GM12878 (cell line): ENCODE measurements at regions of chr15 and their contacts with region 1.

Region 1: GRCh38 chr15:31435261-31435911 is 108.8 kb downstream of the KLF13 start:
- DNase-seq: peak; percentile 87
- ATAC-seq: peak; percentile 85
- H3K4me3 ChIP-seq: peak overlapping the region; percentile 48
- H3K27ac ChIP-seq: peak overlapping the region; percentile 95
- H3K4me1 ChIP-seq: peaks cover 50% of the 10 kb centered on the region
- H3K27me3 ChIP-seq: no peaks in the 10 kb centered on the region
- CTCF ChIP-seq: peak; percentile 85 to 100 (median 92); a peak in 5 of 6 replicates
- EP300 ChIP-seq: peak in 1 of 2 experiments; percentile 43; a peak in 1 of 4 replicates
- POLR2A ChIP-seq: peak; percentile 31
- RAD21 ChIP-seq: peak; percentile 86

Region 2: DNA sequence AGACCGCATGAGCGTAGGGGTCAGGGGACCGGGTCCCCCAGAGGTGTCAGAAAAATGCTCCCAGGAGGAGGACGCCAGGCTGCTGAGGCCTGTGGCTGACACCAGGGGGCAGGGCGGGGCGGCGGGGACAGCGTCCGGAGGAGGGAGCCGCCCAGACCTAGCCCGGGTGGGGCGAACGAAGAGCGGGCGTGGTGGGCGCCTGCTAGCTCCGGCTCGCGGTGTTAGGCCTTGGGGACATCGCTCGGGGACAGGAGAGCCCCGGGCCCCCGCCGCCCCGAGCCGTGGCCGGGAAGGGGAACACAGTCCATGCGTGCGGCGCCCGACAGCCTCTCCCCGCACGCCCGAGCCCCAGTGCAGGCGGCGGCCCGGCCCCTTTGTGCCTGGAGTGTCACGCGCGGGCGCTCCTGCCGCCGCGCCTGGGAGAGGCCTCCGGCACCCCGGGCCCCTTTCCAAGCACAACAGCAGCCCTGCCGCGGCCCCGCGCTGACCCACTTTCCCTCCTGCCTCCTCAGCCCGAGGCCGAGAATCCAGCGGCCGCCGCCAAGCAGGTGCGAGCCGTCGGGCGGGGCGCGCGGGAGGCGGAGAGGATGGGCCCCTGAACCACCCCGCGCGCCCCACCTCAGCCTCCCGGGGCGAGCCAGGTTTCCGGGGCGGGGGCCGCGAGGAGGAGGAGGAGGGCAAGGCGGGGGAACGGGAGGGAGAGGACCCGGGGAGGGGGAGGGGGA is 219.7 kb before region 1 on chr15:
- CTCF ChIA-PET with region 1: interaction called, 32 read pairs
- POLR2A ChIA-PET with region 1: interaction called, 6 read pairs
- RAD21 ChIA-PET with region 1: interaction called, 41 read pairs
- SMC1A ChIA-PET with region 1: interaction called, 48 read pairs
- in situ Hi-C with region 1: no loop called
- intact Hi-C with region 1: no loop called
- DNase-seq: no peak
- ATAC-seq: peak; percentile 91
- H3K4me3 ChIP-seq: peak overlapping the region; percentile 79
- H3K27ac ChIP-seq: peak overlapping the region; percentile 87
- H3K4me1 ChIP-seq: peaks cover 10% of the 10 kb centered on the region
- H3K27me3 ChIP-seq: no peaks in the 10 kb centered on the region
- CTCF ChIP-seq: peak; percentile 80 to 89 (median 89)
- EP300 ChIP-seq: no peak
- POLR2A ChIP-seq: peak; percentile 71
- RAD21 ChIP-seq: peak; percentile 88

Region 3: DNA sequence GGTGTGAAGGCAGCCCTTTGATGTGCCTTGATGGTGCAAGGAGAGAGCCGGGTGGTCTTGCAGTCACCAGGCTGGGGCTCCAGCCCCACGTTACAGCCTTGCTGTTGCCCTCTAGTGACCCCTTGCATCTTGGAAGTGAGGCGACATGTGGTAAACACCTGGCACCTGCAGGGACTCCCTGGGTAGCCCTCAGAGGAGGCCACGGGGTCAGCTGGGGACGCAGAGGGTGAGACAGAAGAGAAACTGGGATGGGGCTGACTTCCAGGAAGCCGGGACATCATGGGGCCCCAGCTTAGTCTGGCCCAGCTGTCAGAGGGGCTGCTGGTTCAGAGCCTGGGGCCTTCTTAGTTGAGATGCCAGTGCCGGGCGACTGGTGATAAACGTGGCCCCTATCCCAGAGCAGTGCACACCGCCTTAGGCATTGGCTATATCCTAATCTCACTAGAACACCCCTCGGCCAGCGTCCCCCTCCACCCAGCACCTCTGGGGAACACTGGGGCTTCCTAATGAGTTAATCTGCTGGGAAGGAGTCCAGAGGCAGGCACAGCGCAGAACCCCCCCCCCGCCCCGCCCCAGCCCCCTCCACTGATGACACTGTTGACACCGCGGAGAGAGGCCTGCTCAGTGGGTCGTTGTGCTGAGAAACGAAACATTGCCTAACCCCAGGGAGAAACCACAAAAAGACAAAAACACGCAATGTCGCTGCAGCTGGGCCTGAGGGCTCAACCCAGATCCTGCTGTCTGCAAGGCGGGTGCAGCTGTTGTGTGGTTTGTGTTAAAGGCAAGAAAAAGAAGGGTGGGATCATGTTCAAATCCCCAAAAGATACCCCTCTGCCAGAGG is 169.3 kb before region 1 on chr15:
- CTCF ChIA-PET with region 1: interaction called, 64 read pairs
- POLR2A ChIA-PET with region 1: interaction called, 5 read pairs
- RAD21 ChIA-PET with region 1: interaction called, 30 read pairs
- SMC1A ChIA-PET with region 1: interaction called, 58 read pairs
- in situ Hi-C with region 1: no loop called
- intact Hi-C with region 1: loop called (anchors 5 kb)
- DNase-seq: peak; percentile 86
- ATAC-seq: peak; percentile 65
- H3K4me3 ChIP-seq: peak overlapping the region; percentile 41; the same call in 1 of the 2 replicates
- H3K27ac ChIP-seq: peak overlapping the region; percentile 94
- H3K4me1 ChIP-seq: peaks cover 63% of the 10 kb centered on the region
- H3K27me3 ChIP-seq: no peaks in the 10 kb centered on the region
- CTCF ChIP-seq: 0 out of 6 replicates have a peak, but pooled peaks of 1 of the 3 experiments have one; percentile 6
- EP300 ChIP-seq: peak; percentile 89 to 93; a peak in 3 of 4 replicates
- POLR2A ChIP-seq: no peak; the same call in 1 of the 2 replicates
- RAD21 ChIP-seq: peak; percentile 32

Region 4: GRCh38 chr15:31338879-31339557 is 96.4 kb before region 1 on chr15:
- CTCF ChIA-PET with region 1: interaction called, 9 read pairs
- POLR2A ChIA-PET with region 1: interaction called, 3 read pairs
- RAD21 ChIA-PET with region 1: interaction called, 5 read pairs
- SMC1A ChIA-PET with region 1: interaction called, 14 read pairs
- in situ Hi-C with region 1: no loop called
- intact Hi-C with region 1: no loop called
- DNase-seq: peak; percentile 75
- ATAC-seq: peak; percentile 81
- H3K4me3 ChIP-seq: peak overlapping the region; percentile 22; the same call in 1 of the 2 replicates
- H3K27ac ChIP-seq: peak overlapping the region; percentile 83
- H3K4me1 ChIP-seq: peaks cover 91% of the 10 kb centered on the region
- H3K27me3 ChIP-seq: no peaks in the 10 kb centered on the region
- CTCF ChIP-seq: no peak
- EP300 ChIP-seq: peak in 1 of 2 experiments; percentile 19; a peak in 2 of 4 replicates
- POLR2A ChIP-seq: no peak
- RAD21 ChIP-seq: no peak

Region 5: GRCh38 chr15:31365655-31366127 is 69.7 kb before region 1 on chr15:
- CTCF ChIA-PET with region 1: interaction called, 83 read pairs
- POLR2A ChIA-PET with region 1: interaction called, 5 read pairs
- RAD21 ChIA-PET with region 1: interaction called, 40 read pairs
- SMC1A ChIA-PET with region 1: interaction called, 45 read pairs
- in situ Hi-C with region 1: no loop called
- intact Hi-C with region 1: loop called (anchors 1 kb)
- DNase-seq: no peak
- ATAC-seq: peak; percentile 81
- H3K4me3 ChIP-seq: peak overlapping the region; percentile 20; the same call in 1 of the 2 replicates
- H3K27ac ChIP-seq: peak overlapping the region; percentile 41
- H3K4me1 ChIP-seq: peaks cover 75% of the 10 kb centered on the region
- H3K27me3 ChIP-seq: no peaks in the 10 kb centered on the region
- CTCF ChIP-seq: peak; percentile 32 to 57 (median 50); a peak in 4 of 6 replicates
- EP300 ChIP-seq: no peak
- POLR2A ChIP-seq: no peak
- RAD21 ChIP-seq: 0 out of 2 replicates have a peak, but pooled peaks have one; percentile 38

Region 6: GRCh38 chr15:31458591-31459399 is 23.4 kb after region 1 on chr15:
- CTCF ChIA-PET with region 1: interaction called, 23 read pairs
- POLR2A ChIA-PET with region 1: interaction called, 32 read pairs
- RAD21 ChIA-PET with region 1: interaction called, 72 read pairs
- SMC1A ChIA-PET with region 1: interaction called, 25 read pairs
- in situ Hi-C with region 1: no loop called
- intact Hi-C with region 1: no loop called
- DNase-seq: peak; percentile 77
- ATAC-seq: peak; percentile 96
- H3K4me3 ChIP-seq: peak overlapping the region; percentile 4; the same call in 1 of the 2 replicates
- H3K27ac ChIP-seq: peak overlapping the region; percentile 24; the same call in 1 of the 2 replicates
- H3K4me1 ChIP-seq: peaks cover 22% of the 10 kb centered on the region
- H3K27me3 ChIP-seq: no peaks in the 10 kb centered on the region
- CTCF ChIP-seq: no peak
- EP300 ChIP-seq: peak; percentile 47 to 55; a peak in 2 of 4 replicates
- POLR2A ChIP-seq: no peak
- RAD21 ChIP-seq: no peak